Lower lobe of right lung (tissue), 2 donors: ENCODE measurements at regions of chr2 and their contacts with region 1.

Region 1: DNA sequence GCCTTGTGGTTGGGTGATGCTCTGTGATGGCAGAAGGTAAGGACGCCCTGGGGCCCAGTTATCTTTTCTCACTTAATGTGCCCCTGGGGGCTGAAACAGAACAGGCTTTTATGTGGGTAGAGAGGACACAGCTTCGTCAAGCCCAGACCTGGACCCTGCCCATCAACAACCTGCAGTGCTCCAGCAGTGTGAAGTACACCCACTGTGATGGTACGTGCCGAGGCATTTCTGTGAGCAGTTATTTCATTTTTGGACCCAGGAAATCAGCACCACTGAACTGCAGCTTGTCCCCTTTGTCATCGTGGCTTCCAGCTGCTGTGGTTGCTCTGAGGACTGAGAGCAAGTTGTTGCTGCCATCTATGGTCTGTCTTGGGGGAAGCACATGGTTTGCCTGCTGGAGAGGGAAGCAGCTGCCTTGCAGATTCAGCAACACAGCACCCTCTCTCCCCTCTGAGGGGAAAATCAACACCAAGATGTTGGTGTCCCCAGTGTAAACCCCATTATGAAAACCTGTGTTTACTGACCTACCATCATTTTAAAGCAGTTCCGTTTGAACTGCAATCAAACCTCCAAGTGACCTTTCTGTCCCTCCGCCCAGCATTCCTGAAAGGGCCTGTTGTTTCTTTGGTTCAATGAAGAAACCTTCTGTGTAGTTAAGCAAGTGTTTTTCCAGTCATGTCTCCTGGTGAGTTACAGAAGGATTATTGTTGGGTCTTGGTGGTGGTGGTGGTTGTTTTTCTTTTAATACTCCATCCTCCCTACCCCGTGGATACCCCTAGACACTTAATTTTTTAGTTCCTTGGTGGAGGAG is 158.2 kb downstream of the MGAT5 start:
- DNase-seq: no peak
- ATAC-seq: peak; percentile 82 to 85
- H3K4me3 ChIP-seq: no peak overlapping the region
- H3K27ac ChIP-seq: no peak overlapping the region
- H3K4me1 ChIP-seq: peaks cover 10% of the 10 kb centered on the region
- H3K27me3 ChIP-seq: no peaks in the 10 kb centered on the region
- CTCF ChIP-seq: peak; percentile 66

Region 2: DNA sequence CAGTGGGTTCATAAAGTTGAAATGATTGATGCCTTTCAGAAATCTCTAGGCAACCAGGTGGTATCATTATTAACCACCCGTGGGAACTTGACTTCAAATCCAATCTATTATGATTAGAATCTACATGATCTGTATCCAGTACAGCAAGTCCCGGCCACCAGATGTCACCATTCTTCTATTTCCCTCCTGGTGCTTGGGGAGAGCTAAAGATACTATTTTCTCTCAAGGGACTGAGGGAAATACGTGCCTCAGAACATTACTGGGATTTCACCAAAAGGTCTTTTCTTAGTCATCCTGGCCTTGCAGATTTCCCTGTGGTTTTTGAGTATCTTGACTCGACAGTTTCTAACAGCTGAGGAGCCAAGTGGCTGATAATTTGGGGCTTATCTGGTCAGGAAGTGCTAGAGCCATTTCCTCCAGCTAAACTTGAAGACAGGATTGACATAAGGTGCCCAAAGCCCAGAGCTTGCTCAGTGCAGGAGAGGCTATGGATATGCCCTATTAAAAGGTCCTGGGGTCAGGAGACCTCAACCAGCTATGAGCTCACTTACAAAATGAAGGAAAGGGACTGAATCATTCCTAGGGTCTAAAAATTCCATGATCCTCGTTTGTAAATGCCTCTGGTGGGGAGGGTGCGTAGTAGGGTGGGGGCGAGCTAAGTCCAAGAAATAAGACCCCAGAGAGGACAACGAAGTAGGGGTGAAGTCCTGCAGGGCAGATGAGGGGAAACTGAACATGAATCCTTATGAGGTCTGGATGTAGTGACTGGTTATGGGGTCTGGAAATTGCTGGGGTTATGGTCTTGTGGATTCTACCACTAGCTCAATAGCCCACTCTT is 293.5 kb before region 1 on chr2:
- intact Hi-C with region 1: loop called (anchors 10 kb)
- DNase-seq: peak; percentile 83
- ATAC-seq: peak; percentile 69 to 75
- H3K4me3 ChIP-seq: no peak overlapping the region
- H3K27ac ChIP-seq: peak overlapping the region; percentile 42
- H3K4me1 ChIP-seq: peaks cover 41% of the 10 kb centered on the region
- H3K27me3 ChIP-seq: no peaks in the 10 kb centered on the region
- CTCF ChIP-seq: peak; percentile 82